CD8-positive, alpha-beta T cell (primary cell): ENCODE measurements at regions of chr22 and their contacts with region 1.

Region 1: GRCh38 chr22:43088979-43089717 is at the start of gene TTLL1:
- DNase-seq: peak; percentile 70 to 91 (median 86)
- ATAC-seq: peak; percentile 90
- H3K4me3 ChIP-seq: peak within 1 kb of the TSS; percentile 60 to 62
- H3K4me3 Mint-ChIP-seq: peak within 1 kb of the TSS; percentile 85
- H3K27ac ChIP-seq: peak within 1 kb of the TSS; percentile 42 to 52
- H3K27ac Mint-ChIP-seq: peak within 1 kb of the TSS; percentile 71
- H3K4me1 ChIP-seq: peaks cover 8% of the 10 kb centered on the region
- H3K4me1 Mint-ChIP-seq: peaks cover 25% of the 10 kb centered on the region
- H3K27me3 ChIP-seq: no peaks in the 10 kb centered on the region
- H3K27me3 Mint-ChIP-seq: no peaks in the 10 kb centered on the region
- CTCF ChIP-seq: no peak
- total RNA-seq, gene TTLL1: 3.5 to 3.9 TPM

Region 2: DNA sequence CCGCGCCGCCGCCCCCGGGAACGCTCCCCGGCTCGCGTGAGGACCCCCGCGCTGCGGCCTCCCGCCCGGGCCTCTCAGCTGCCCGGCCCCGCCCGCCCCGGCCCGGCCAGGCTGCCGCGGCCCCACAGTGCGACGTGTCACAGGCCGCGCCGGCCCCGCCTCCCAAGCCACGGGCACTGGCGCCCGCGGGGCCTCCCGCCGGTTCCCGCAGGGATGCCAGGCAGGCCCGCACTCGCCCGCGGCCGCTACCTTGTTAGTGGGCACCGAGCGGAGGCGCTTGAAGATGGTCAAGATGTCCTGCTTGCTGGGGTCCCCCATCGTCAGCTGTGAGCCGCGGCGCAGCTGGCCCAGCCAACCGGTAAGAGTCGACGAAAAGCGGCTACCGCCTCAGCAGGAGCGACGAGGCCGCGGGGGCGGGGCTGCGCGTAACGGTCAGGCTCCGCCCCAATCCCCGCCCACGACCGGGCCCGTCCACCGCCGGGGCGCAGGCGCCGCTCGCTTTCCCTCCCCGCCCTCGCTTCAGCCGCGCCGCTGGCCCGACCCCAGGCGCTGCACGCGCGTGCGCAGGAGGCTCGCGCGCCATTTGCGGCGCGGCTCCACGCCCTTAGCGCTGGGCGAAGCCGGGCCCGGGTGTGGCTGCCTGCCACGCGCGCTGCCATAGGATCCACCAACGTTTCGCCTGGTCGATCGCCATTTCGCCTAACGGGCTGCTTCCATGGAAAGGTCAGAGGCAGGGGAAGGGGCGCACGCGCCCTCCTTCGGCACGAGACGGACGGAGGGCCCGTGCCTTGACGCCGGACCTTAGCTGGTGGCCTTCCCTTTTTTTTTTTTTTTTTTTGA is 232.1 kb before region 1 on chr22 and contains the start of gene ARFGAP3:
- CTCF ChIA-PET with region 1: no interaction called
- POLR2A ChIA-PET with region 1: no interaction called
- intact Hi-C with region 1: loop called in 1 of 2 experiments (anchors 2 kb)
- DNase-seq: peak; percentile 89 to 98 (median 94)
- ATAC-seq: peak; percentile 95
- H3K4me3 ChIP-seq: peak within 1 kb of the TSS; percentile 85 to 91
- H3K4me3 Mint-ChIP-seq: peak within 1 kb of the TSS; percentile 80
- H3K27ac ChIP-seq: peak within 1 kb of the TSS; percentile 90 to 92
- H3K27ac Mint-ChIP-seq: peak within 1 kb of the TSS; percentile 85
- H3K4me1 ChIP-seq: peaks cover 24% of the 10 kb centered on the region
- H3K4me1 Mint-ChIP-seq: peaks cover 11% of the 10 kb centered on the region
- H3K27me3 ChIP-seq: no peaks in the 10 kb centered on the region
- H3K27me3 Mint-ChIP-seq: no peaks in the 10 kb centered on the region
- CTCF ChIP-seq: no peak
- total RNA-seq, gene ARFGAP3: 25.4 TPM

Region 3: GRCh38 chr22:42937164-42937843 is 151.8 kb before region 1 on chr22:
- CTCF ChIA-PET with region 1: no interaction called
- POLR2A ChIA-PET with region 1: no interaction called
- intact Hi-C with region 1: no loop called
- DNase-seq: peak in 2 of 9 experiments; percentile 28 to 41
- ATAC-seq: peak; percentile 48
- H3K4me3 ChIP-seq: no peak overlapping the region
- H3K4me3 Mint-ChIP-seq: no peak overlapping the region
- H3K27ac ChIP-seq: no peak overlapping the region
- H3K27ac Mint-ChIP-seq: no peak overlapping the region
- H3K4me1 ChIP-seq: peaks cover 18% of the 10 kb centered on the region
- H3K4me1 Mint-ChIP-seq: peaks cover 58% of the 10 kb centered on the region
- H3K27me3 ChIP-seq: no peaks in the 10 kb centered on the region
- H3K27me3 Mint-ChIP-seq: no peaks in the 10 kb centered on the region
- CTCF ChIP-seq: no peak

Region 4: DNA sequence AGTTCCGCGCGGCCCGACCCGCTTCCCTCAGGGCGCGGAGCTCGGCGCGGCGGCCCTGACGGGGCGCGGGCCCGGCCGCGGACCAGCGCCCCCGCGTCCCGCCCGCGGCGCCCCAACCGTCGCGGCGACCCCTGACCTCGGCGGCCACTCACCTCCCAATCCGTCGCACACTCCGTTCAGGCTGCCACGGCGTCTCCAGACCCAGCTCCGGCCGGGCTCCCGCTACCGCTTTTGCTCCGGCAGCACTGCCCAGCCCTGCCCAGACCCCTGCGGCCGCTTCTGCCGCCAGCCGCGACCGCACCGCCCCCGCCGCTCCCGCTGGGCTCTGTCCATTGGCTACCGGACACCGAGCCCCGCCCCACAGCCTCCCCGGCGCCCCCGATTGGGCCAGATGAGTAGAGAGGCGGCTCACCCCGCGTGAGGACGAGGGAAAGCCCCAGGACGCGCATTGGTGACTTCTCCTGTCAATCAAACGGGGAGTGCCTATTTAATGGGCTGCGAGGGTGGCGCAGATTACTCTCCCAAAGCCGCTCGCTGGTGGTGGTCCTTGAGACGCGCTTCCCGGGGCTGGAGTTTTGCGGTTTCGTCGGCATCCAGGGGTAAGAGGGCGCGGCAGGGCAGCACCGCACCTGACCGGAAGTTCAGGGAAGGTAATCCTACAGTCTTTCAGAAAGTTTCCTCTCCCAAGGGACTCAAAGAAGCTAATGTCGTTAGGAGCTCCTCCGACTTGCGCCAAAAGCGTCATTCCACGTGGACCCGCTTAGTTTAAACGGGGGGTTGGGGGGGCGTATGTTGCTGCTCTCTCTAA is 74.1 kb before region 1 on chr22 and contains the start of gene PACSIN2:
- CTCF ChIA-PET with region 1: no interaction called
- POLR2A ChIA-PET with region 1: no interaction called
- intact Hi-C with region 1: loop called in 1 of 2 experiments (anchors 1 kb)
- DNase-seq: peak; percentile 98 to 99 (median 98)
- ATAC-seq: peak; percentile 98
- H3K4me3 ChIP-seq: peak within 1 kb of the TSS; percentile 79 to 85
- H3K4me3 Mint-ChIP-seq: peak within 1 kb of the TSS; percentile 98
- H3K27ac ChIP-seq: peak within 1 kb of the TSS; percentile 73 to 76
- H3K27ac Mint-ChIP-seq: peak within 1 kb of the TSS; percentile 97
- H3K4me1 ChIP-seq: peaks cover 14% of the 10 kb centered on the region
- H3K4me1 Mint-ChIP-seq: peaks cover 33% of the 10 kb centered on the region
- H3K27me3 ChIP-seq: no peaks in the 10 kb centered on the region
- H3K27me3 Mint-ChIP-seq: no peaks in the 10 kb centered on the region
- CTCF ChIP-seq: no peak
- total RNA-seq, gene PACSIN2: 16.8 to 18.5 TPM

Region 5: DNA sequence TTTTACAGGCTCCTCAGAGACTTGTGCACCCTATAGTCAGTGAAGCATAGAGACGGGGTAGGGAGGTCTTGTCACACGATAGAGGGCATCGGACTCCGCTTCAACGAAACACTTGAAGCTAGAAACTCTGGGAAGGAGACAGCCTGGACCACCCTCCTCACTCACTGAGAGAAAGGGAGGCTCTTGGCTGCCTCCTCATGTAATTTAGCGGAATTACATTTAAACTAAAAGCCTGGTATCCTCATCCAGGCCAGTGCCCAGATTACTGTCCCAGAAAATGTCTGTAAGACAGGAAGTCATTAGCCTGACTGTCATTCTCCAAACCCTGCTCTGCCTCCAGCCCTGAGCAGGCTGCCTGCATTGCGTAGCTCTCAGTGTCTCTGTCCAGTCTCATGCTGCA is 36.0 kb before region 1 on chr22:
- CTCF ChIA-PET with region 1: no interaction called
- POLR2A ChIA-PET with region 1: no interaction called
- intact Hi-C with region 1: no loop called
- DNase-seq: no peak
- ATAC-seq: no peak
- H3K4me3 ChIP-seq: no peak overlapping the region
- H3K4me3 Mint-ChIP-seq: no peak overlapping the region
- H3K27ac ChIP-seq: no peak overlapping the region
- H3K27ac Mint-ChIP-seq: no peak overlapping the region
- H3K4me1 ChIP-seq: no peaks in the 10 kb centered on the region
- H3K4me1 Mint-ChIP-seq: no peaks in the 10 kb centered on the region
- H3K27me3 ChIP-seq: no peaks in the 10 kb centered on the region
- H3K27me3 Mint-ChIP-seq: no peaks in the 10 kb centered on the region
- CTCF ChIP-seq: no peak

Region 6: GRCh38 chr22:43110444-43110926 is 21.3 kb after region 1 on chr22 and contains the start of gene BIK:
- CTCF ChIA-PET with region 1: interaction called, 6 read pairs
- POLR2A ChIA-PET with region 1: no interaction called
- intact Hi-C with region 1: loop called (anchors 1 kb)
- DNase-seq: peak in 8 of 9 experiments; percentile 31 to 69 (median 52)
- ATAC-seq: peak; percentile 49
- H3K4me3 ChIP-seq: peak within 1 kb of the TSS; percentile 51 to 82
- H3K4me3 Mint-ChIP-seq: peak within 1 kb of the TSS; percentile 87
- H3K27ac ChIP-seq: peak within 1 kb of the TSS in 1 of 2 experiments; percentile 20
- H3K27ac Mint-ChIP-seq: no peak within 1 kb of the TSS
- H3K4me1 ChIP-seq: peaks cover 7% of the 10 kb centered on the region
- H3K4me1 Mint-ChIP-seq: peaks cover 10% of the 10 kb centered on the region
- H3K27me3 ChIP-seq: no peaks in the 10 kb centered on the region
- H3K27me3 Mint-ChIP-seq: no peaks in the 10 kb centered on the region
- CTCF ChIP-seq: peak; percentile 12
- total RNA-seq, gene BIK: 5.3 to 6.1 TPM

Region 7: GRCh38 chr22:43142880-43143562 is 53.9 kb after region 1 on chr22 and contains the start of gene MCAT:
- CTCF ChIA-PET with region 1: interaction called, 3 read pairs
- POLR2A ChIA-PET with region 1: no interaction called
- intact Hi-C with region 1: loop called (anchors 1 kb)
- DNase-seq: peak; percentile 62 to 89 (median 78)
- ATAC-seq: peak; percentile 82
- H3K4me3 ChIP-seq: peak within 1 kb of the TSS; percentile 68 to 88
- H3K4me3 Mint-ChIP-seq: peak within 1 kb of the TSS; percentile 87
- H3K27ac ChIP-seq: peak within 1 kb of the TSS; percentile 85 to 90
- H3K27ac Mint-ChIP-seq: peak within 1 kb of the TSS; percentile 88
- H3K4me1 ChIP-seq: peaks cover 7% of the 10 kb centered on the region
- H3K4me1 Mint-ChIP-seq: peaks cover 25% of the 10 kb centered on the region
- H3K27me3 ChIP-seq: no peaks in the 10 kb centered on the region
- H3K27me3 Mint-ChIP-seq: no peaks in the 10 kb centered on the region
- CTCF ChIP-seq: no peak
- total RNA-seq, gene MCAT: 5.9 to 7.8 TPM

Region 8: DNA sequence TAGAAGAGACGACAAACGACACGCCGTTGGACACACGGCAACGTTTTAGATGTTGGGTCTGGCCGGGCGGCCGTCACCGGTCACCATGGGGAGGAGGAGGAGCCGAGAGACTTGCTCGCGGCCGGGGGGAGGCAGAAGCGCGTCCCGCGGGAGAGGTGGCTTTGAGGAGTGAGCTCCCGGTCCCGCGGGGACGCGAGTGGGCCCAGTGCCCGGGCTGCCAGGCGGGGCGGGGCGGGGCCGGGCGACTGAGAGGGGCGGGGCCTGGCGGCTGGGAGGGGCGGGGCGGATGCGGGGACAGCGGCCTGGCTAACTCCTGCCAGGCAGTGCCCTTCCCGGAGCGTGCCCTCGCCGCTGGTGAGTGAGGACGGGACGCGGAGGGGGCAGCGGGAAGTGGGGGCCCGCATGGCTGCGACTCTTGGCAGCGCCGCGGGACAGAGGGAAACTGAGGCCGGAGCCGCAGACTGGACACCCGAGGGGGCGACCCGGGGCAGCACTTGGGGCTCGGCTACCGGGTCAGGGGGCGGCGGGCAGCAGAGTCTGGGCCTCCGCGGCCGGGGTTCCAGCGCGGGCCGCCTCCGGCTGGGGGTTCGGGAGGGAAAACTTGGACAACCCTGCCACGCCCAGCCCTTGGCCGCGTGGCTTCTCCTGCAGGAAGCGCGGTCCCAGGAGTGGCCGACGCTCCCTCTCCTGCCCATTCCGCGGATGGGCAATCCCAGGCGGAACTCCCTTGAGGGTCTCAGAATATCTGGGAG is 62.3 kb after region 1 on chr22 and contains the start of gene TSPO:
- CTCF ChIA-PET with region 1: no interaction called
- POLR2A ChIA-PET with region 1: no interaction called
- intact Hi-C with region 1: loop called in 1 of 2 experiments (anchors 1 kb)
- DNase-seq: peak; percentile 29 to 77 (median 57)
- ATAC-seq: peak; percentile 60
- H3K4me3 ChIP-seq: peak within 1 kb of the TSS; percentile 73 to 84
- H3K4me3 Mint-ChIP-seq: peak within 1 kb of the TSS; percentile 91
- H3K27ac ChIP-seq: peak within 1 kb of the TSS; percentile 56 to 62
- H3K27ac Mint-ChIP-seq: peak within 1 kb of the TSS; percentile 90
- H3K4me1 ChIP-seq: peaks cover 12% of the 10 kb centered on the region
- H3K4me1 Mint-ChIP-seq: peaks cover 25% of the 10 kb centered on the region
- H3K27me3 ChIP-seq: no peaks in the 10 kb centered on the region
- H3K27me3 Mint-ChIP-seq: no peaks in the 10 kb centered on the region
- CTCF ChIP-seq: no peak
- total RNA-seq, gene TSPO: 22.5 to 24.7 TPM

Region 9: DNA sequence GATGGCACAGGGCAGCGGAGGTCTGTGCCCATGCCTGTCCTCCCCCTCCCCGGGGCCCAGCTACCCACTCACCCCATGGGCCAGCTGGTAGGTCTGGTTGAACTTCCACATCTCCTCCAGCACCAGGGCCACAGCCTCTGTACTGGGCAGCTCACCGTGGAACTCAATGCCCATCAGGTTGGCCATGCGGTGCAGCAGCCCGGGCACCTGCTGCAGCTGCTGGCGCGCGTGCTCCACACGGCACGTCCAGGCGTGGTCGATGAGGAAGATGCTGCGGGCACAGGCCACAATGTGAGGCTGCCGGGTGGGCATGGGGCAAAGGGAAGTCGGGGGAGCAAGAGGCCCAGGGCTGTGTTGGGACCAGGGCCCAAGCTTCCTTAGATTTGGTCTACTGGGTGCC is 91.5 kb after region 1 on chr22:
- CTCF ChIA-PET with region 1: no interaction called
- POLR2A ChIA-PET with region 1: no interaction called
- intact Hi-C with region 1: no loop called
- DNase-seq: no peak
- ATAC-seq: no peak
- H3K4me3 ChIP-seq: no peak overlapping the region
- H3K4me3 Mint-ChIP-seq: no peak overlapping the region
- H3K27ac ChIP-seq: no peak overlapping the region
- H3K27ac Mint-ChIP-seq: no peak overlapping the region
- H3K4me1 ChIP-seq: peaks cover 3% of the 10 kb centered on the region
- H3K4me1 Mint-ChIP-seq: peaks cover 10% of the 10 kb centered on the region
- H3K27me3 ChIP-seq: no peaks in the 10 kb centered on the region
- H3K27me3 Mint-ChIP-seq: no peaks in the 10 kb centered on the region
- CTCF ChIP-seq: no peak